Common myeloid progenitor, CD34-positive (primary cell): ENCODE measurements at regions of chr20 and their contacts with region 1.

Region 1: DNA sequence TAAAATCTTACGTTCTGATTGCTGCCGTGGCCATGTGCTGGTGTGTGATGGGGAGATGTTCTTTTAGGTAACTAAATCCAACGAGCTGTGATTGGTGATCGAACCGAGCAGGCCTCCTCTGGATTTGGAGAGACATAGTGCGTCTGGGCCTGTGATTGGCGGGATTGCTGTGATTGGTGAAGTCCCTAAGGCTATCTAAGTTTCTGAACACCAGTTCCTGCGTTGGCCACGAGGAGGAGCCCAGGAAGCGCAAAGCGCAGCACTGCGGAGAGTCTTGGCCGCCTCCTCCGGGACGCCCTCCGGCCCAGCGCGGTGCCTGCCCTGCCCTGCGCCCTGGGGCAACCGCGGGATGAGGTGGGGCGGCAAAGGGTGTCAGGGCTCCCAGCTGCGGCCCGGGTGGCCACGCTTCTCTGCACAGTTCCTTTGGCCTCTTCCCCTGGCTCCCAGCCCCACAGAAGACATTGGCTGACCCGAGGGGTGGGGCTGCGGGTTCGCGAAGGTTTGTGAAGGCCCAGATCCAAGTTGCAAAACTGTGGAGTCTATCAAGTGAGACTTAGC is 33.0 kb downstream of the HNF4A start:
- DNase-seq: peak; percentile 51 to 67 (median 63)
- H3K4me3 ChIP-seq: no peak overlapping the region
- H3K27ac ChIP-seq: no peak overlapping the region
- H3K4me1 ChIP-seq: peaks cover 0 to 9% (median 1%) of the 10 kb centered on the region in 4 experiments
- H3K27me3 ChIP-seq: peaks cover 0 to 14% (median 5%) of the 10 kb centered on the region in 5 experiments

Region 2: GRCh38 chr20:44271915-44272663 is 116.5 kb before region 1 on chr20:
- CTCF ChIA-PET with region 1: no interaction called
- POLR2A ChIA-PET with region 1: no interaction called
- DNase-seq: no peak
- H3K4me3 ChIP-seq: no peak overlapping the region
- H3K27ac ChIP-seq: no peak overlapping the region
- H3K4me1 ChIP-seq: no peaks in the 10 kb centered on the region
- H3K27me3 ChIP-seq: no peaks in the 10 kb centered on the region

Region 3: GRCh38 chr20:44460795-44461141 is 72.2 kb after region 1 on chr20:
- CTCF ChIA-PET with region 1: interaction called, 10 read pairs
- POLR2A ChIA-PET with region 1: no interaction called
- DNase-seq: peak; percentile 37 to 63 (median 58)
- H3K4me3 ChIP-seq: no peak overlapping the region
- H3K27ac ChIP-seq: no peak overlapping the region
- H3K4me1 ChIP-seq: peaks cover 0 to 2% (median 0%) of the 10 kb centered on the region in 4 experiments
- H3K27me3 ChIP-seq: peaks cover 0 to 2% (median 0%) of the 10 kb centered on the region in 5 experiments